Breast epithelium (tissue), 4 donors: ENCODE measurements at regions of chr6 and their contacts with region 1.

Region 1: DNA sequence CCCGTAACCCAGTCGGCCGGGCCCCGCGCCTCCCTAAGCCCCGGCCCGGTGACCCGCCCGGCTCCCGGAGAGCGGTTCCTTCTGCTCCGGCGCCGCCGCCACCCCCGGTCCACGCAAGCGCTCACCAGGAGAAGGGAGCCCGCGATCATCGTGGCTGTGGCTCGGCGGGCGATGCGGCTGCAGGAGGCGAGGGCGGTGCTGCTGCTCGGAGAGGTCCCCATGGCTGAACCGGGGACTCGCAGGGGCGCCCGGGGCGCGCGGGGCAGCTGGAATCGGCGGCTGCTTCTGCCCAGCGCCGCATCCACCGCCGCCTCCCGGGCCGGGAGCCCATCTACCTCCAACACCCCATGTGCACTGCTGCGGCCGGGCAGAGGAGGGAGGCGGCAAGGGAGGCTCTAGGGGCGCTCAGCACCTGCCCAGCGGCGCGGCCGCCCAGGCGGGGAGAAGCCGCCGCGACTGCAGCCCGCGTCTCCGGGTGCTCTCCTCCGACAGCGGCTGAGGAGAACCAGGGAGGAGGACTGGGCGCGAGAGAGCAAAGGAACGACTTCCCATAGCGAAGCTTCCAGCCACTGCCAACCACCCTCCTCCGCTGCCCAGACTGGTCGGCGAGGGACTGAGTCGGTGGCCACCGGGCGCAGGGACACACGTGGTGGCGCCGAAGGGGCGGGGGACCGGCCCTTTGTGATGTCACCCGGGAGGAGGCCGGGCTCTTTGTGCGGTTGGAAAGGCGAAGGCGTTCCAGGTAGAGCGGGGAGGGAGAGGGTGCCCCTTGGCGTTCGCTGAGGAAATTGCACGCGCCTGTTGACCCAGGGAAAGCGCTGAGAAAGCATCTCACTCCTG is at the start of gene TNFRSF21:
- DNase-seq: peak; percentile 89 to 91
- H3K4me3 ChIP-seq: peak within 1 kb of the TSS; percentile 68 to 85 (median 79)
- H3K27ac ChIP-seq: peak within 1 kb of the TSS; percentile 79 to 86
- H3K4me1 ChIP-seq: no peaks in the 10 kb centered on the region
- H3K27me3 ChIP-seq: no peaks in the 10 kb centered on the region
- CTCF ChIP-seq: peak; percentile 72 to 96 (median 93)
- POLR2A ChIP-seq: no peak
- total RNA-seq, gene TNFRSF21: 10.2 to 21.4 (median 20.9) TPM

Region 2: GRCh38 chr6:46876126-46876525 is 433.4 kb before region 1 on chr6:
- intact Hi-C with region 1: no loop called
- DNase-seq: peak; percentile 64 to 87
- H3K4me3 ChIP-seq: no peak overlapping the region
- H3K27ac ChIP-seq: peak overlapping the region in 1 of 2 donors; percentile 43
- H3K4me1 ChIP-seq: no peaks in the 10 kb centered on the region
- H3K27me3 ChIP-seq: no peaks in the 10 kb centered on the region
- CTCF ChIP-seq: no peak
- POLR2A ChIP-seq: no peak

Region 3: DNA sequence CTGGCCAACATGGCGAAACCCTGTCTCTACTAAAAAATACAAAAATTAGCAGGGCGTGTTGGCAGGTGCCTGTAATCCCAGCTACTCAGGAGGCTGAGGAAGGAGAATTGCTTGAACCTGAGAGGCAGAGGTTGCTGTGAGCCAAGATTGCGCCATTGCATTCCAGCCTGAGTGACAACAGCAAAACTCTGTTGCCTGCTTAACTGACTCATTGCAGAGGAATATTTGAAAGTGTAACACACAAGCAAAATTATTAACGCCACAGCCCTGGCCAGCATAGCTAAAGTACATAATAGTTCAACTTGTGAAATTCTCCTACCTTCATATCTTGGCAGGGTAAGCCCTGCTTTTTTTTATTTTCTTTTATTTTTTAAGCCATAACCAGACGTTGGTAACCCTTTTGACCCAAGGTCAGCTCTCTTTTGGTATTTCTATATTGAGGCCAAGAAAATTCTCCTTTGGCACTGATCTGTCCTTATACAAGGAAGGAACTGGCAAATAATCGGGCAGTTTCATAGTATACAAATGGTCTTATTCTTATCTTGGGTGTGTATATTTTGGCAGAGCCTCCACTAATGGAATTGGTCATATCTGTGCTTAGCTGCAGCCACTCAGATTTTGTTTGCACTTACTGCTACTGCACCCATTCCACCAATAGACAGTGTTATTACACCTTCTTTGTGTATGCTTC is 383.8 kb before region 1 on chr6:
- intact Hi-C with region 1: loop called (anchors 10 kb)
- DNase-seq: peak in 1 of 2 donors; percentile 70
- H3K4me3 ChIP-seq: no peak overlapping the region
- H3K27ac ChIP-seq: peak overlapping the region; percentile 22 to 49
- H3K4me1 ChIP-seq: peaks cover 0 to 6% of the 10 kb centered on the region in 2 donors
- H3K27me3 ChIP-seq: no peaks in the 10 kb centered on the region
- CTCF ChIP-seq: no peak
- POLR2A ChIP-seq: no peak

Region 4: DNA sequence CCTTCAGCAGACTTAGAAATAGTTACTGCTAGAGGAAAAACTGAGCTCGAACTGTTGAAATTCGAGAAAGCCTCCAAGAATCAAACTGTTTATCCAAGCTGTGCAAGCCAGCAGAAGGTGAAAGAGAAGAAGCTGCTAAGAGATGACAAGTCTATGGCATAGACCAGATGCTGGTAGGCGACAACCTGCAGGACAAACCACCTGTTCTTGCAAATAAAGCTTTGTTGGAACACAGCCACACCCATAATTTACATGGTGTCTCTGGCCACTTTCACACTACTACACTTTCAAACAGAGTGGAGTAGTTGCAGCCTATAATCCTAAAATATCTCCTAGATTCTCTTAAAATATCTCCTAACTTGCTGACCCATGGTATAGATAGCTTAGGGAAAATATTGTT is 33.1 kb before region 1 on chr6:
- intact Hi-C with region 1: no loop called
- DNase-seq: no peak
- H3K4me3 ChIP-seq: no peak overlapping the region
- H3K27ac ChIP-seq: no peak overlapping the region
- H3K4me1 ChIP-seq: no peaks in the 10 kb centered on the region
- H3K27me3 ChIP-seq: no peaks in the 10 kb centered on the region
- CTCF ChIP-seq: no peak
- POLR2A ChIP-seq: no peak